Activated CD4-positive, alpha-beta memory T cell treated with anti-CD3 and anti-CD28 coated beads for 36 hours (primary cell): ENCODE measurements at regions of chr20 and their contacts with region 1.

Region 1: DNA sequence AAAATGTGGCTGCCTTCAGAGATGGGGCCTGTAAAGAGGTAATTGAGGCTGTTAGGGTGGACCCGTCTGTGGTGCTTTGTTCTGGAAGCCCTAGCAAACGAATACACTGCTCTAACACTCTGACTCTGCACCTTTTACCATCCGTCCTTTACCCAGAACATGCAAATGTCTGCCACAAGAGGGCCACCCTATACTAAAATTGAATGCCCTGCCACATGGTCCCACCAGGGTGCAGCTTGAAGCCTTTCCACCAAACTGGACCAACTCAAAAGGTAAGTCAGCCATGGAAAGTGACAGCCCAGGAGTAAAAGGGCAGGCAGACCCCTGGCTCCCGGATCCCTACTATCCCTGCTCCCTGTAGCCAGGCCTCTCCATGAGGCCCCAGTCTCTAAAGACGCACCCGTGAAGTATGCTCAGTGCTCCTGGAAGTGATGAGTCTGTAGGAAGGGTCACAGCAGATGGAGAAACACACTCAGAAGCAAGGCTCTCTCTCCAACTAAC is 5.8 kb upstream of the BFSP1 start:
- DNase-seq: peak; percentile 78
- H3K4me3 Mint-ChIP-seq: no peak overlapping the region
- H3K27ac Mint-ChIP-seq: peak overlapping the region; percentile 28
- H3K4me1 Mint-ChIP-seq: peaks cover 16% of the 10 kb centered on the region
- H3K27me3 Mint-ChIP-seq: peaks cover 9% of the 10 kb centered on the region

Region 2: DNA sequence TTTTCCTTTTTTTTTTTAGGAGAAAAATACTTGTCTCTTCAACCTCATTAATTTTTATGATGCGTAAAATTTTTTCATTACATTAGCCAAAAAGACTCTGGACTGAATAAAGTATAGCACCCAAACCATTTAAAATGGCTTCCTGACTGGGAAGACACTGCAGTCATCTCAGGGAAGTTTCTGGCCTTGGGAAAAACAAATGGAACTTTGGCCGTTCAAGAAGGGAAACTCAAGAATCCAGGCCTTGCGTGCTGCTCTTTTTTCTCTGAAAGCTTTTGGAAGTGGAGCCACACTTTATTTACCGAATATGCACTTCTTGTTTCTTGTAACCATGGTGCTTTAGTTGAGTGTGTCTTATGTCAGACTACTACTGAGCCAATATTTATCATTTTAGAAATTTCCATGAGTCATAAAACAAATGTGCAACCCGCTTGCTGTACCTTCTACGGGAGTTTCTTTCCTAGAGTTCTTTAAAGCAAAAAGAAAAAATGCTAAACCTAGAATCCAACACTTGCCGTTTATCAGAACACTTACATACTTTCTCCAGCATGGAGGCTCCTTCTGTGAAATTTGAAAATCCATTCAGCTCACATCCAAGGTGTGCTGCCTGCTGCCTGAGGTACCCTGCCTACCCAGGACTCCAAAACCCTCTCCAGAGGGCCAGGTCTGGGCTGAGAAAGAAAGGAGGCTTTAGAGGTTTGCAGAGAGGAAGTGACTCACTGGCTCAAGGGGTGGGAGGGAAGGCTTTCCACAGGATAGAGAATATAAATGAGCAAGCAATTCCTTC is 21.4 kb after region 1 on chr20:
- CTCF ChIA-PET with region 1: interaction called, 6 read pairs
- POLR2A ChIA-PET with region 1: no interaction called
- intact Hi-C with region 1: loop called (anchors 1 kb)
- DNase-seq: peak; percentile 59
- H3K4me3 Mint-ChIP-seq: peak overlapping the region; percentile 14
- H3K27ac Mint-ChIP-seq: peak overlapping the region; percentile 87
- H3K4me1 Mint-ChIP-seq: peaks cover 38% of the 10 kb centered on the region
- H3K27me3 Mint-ChIP-seq: no peaks in the 10 kb centered on the region

Region 3: GRCh38 chr20:17611540-17612286 is 74.7 kb after region 1 on chr20:
- CTCF ChIA-PET with region 1: interaction called, 20 read pairs
- POLR2A ChIA-PET with region 1: no interaction called
- intact Hi-C with region 1: no loop called
- DNase-seq: peak; percentile 12
- H3K4me3 Mint-ChIP-seq: peak overlapping the region; percentile 57
- H3K27ac Mint-ChIP-seq: peak overlapping the region; percentile 89
- H3K4me1 Mint-ChIP-seq: peaks cover 38% of the 10 kb centered on the region
- H3K27me3 Mint-ChIP-seq: no peaks in the 10 kb centered on the region

Region 4: DNA sequence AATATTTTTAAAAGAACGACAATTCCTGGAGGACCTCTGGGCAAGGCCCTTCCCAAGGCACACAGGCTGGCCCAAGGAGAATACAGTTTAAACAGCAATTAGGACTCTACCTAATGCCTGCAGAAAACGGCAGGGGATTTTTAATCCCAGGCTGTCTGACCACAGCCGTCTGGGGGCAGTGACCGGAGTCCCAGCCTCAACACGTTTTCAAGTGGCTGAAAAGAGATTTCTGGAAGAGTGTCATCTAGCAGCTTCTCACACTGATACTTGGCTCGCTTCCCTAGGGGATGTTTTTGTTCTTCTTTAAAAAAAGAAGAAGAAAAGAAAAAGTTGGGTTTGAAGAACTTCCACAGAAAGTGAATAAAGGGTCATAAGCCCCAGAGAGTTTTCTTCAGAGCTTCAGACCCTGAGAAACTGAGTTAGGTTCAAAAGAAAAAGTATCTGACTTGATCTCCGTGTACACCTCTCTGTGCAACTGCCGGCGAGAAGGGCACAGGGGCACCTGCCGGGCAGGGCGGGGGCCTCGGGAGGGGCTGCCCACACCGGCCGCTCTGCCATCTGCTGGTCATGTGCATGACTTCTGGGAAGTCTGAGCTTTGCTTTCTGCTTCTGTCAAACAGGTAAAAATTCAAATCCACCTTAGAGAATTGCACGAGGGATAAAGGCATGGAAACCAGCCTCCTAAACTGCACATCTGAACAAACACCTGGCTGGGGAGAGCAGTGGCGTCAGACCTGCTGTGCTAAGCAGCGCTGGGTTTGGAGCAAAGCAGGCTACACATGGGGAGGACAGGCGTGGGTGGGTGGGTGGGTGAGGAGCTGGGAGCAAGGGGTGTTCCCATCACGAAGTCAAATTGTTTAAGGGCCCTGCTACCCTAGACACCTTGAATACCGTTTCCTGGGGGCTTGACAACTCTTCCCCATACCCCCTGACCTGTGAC is 112.1 kb after region 1 on chr20:
- CTCF ChIA-PET with region 1: interaction called, 12 read pairs
- POLR2A ChIA-PET with region 1: no interaction called
- intact Hi-C with region 1: no loop called
- DNase-seq: peak; percentile 41
- H3K4me3 Mint-ChIP-seq: no peak overlapping the region
- H3K27ac Mint-ChIP-seq: no peak overlapping the region
- H3K4me1 Mint-ChIP-seq: peaks cover 5% of the 10 kb centered on the region
- H3K27me3 Mint-ChIP-seq: no peaks in the 10 kb centered on the region

Region 5: GRCh38 chr20:17995967-17996819 is 459.2 kb after region 1 on chr20:
- CTCF ChIA-PET with region 1: interaction called, 7 read pairs
- POLR2A ChIA-PET with region 1: no interaction called
- intact Hi-C with region 1: loop called (anchors 1 kb)
- DNase-seq: peak; percentile 55
- H3K4me3 Mint-ChIP-seq: no peak overlapping the region
- H3K27ac Mint-ChIP-seq: no peak overlapping the region
- H3K4me1 Mint-ChIP-seq: peaks cover 28% of the 10 kb centered on the region
- H3K27me3 Mint-ChIP-seq: peaks cover 3% of the 10 kb centered on the region